ENCODE measurements at regions of chr5 and their contacts with region 1.

Region 1: GRCh38 chr5:133423618-133424282 is 188.6 kb downstream of the FSTL4 start:
- DNase-seq: peak; percentile 33 to 92 (median 64)
- ATAC-seq: peak; percentile 95
- H3K4me3 ChIP-seq: no peak overlapping the region
- H3K27ac ChIP-seq: no peak overlapping the region
- H3K4me1 ChIP-seq: peaks cover 0 to 5% of the 10 kb centered on the region in 2 donors
- H3K27me3 ChIP-seq: peaks cover 0 to 7% of the 10 kb centered on the region in 2 donors
- CTCF ChIP-seq: peak; percentile 92 to 94

Region 2: GRCh38 chr5:133523013-133523658 is 99.4 kb after region 1 on chr5:
- intact Hi-C with region 1: no loop called
- DNase-seq: no peak
- ATAC-seq: no peak
- H3K4me3 ChIP-seq: no peak overlapping the region
- H3K27ac ChIP-seq: no peak overlapping the region
- H3K4me1 ChIP-seq: no peaks in the 10 kb centered on the region
- H3K27me3 ChIP-seq: no peaks in the 10 kb centered on the region
- CTCF ChIP-seq: no peak

Region 3: GRCh38 chr5:133869519-133870335 is 446.0 kb after region 1 on chr5:
- intact Hi-C with region 1: loop called in 1 of 2 experiments (anchors 10 kb)
- DNase-seq: no peak
- ATAC-seq: no peak
- H3K4me3 ChIP-seq: no peak overlapping the region
- H3K27ac ChIP-seq: no peak overlapping the region
- H3K4me1 ChIP-seq: no peaks in the 10 kb centered on the region
- H3K27me3 ChIP-seq: no peaks in the 10 kb centered on the region
- CTCF ChIP-seq: no peak